ENCODE measurements at regions of chr6 and their contacts with region 1.

Region 1: GRCh38 chr6:116570856-116571682 is at the start of gene RWDD1:
- DNase-seq: peak; percentile 98 to 100 (median 99)

Region 2: GRCh38 chr6:116217069-116217468 is 354.0 kb before region 1 on chr6:
- intact Hi-C with region 1: loop called (anchors 5 kb)
- DNase-seq: no peak

Region 3: DNA sequence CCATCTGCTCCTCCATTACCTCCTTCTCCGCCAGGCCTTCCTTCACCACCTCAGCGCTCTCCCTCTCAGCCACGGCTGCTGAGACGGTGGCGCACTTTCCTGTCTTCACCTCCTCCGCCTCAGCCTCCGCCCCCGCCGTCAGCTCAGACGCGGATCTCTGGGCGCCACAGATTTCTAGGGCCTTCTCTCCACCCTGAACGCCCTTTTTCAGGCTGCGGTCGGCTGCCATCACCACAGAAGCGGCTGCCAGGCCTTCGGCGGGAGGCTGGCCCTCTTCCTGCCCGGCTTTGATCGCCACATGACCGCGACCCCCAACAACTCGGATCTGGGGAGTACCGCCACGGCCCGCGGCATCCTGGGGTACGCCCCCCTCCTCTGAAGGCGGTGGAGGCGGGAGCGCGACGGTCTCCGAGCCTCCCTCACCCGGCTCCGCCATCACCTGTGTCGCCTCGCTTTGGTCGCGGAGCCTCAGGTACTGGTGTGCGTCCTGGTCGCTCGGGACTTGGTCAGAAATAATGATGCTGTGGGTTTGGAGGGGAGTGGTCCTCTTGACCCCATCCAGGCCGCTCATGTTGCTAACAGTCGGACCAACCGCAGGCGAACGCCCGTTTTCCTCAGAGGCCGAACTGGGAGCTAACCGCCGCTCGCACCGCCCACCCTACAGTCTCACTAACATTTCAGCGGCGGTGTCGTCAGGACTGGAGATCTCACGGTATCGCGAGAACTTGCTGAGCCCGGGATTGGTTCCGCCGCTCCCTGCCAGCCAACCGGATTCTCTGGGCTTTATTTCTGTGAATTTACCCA is 291.6 kb before region 1 on chr6 and contains the start of gene TSPYL1:
- intact Hi-C with region 1: loop called (anchors 1 kb)
- DNase-seq: peak; percentile 90 to 99 (median 96)

Region 4: DNA sequence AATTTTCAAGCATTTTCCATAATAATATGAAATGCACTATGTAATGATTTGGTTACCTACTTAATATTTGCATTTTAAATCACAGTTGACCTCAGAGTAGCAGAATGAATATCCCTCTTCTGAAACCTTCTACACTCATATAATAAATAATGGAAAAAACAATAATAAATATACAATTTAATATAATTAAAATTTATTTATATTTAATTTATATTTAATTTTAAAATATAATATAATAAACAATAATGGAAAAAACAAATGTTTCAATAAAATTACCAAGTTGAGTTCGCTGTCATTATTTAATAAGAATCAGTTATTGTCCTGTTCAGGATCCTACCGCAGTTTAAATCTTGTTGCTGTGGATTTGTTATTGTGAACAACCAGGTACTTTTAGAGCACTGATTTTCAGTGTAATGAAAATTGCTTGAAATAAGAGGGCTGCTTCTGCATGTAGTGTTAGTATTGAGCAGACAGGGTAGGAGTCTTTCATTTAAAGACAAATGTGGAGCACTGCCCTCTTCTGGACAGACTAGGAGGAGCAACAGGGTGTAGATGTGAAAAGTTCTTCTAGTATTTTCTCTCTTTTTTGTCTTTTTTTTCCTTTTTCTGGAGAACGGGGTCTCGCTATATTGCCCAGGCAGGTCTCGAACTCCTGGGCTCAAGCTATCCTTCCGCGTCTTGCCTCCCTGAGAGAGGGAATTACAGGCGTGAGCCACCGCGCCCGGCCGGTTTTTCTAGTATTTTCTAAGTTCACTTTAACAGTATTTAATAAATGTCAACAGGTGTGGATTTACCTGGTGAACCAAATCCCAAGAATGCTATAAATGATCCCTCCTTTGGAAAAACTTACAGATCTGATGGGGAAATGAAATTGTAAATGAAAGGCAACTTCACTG is 39.1 kb before region 1 on chr6:
- intact Hi-C with region 1: no loop called
- DNase-seq: peak in 5 of 10 donors; percentile 10 to 51 (median 42)

Region 5: GRCh38 chr6:116615937-116616736 is 45.1 kb after region 1 on chr6 and contains the start of gene RSPH4A:
- intact Hi-C with region 1: loop called (anchors 2 kb)
- DNase-seq: peak; percentile 66 to 98 (median 86)

Measured in posterior cingulate gyrus (tissue), 11 donors.